ENCODE measurements at regions of chr7 and their contacts with region 1.

Region 1: GRCh38 chr7:44999245-45000095 is 531 bp upstream of the CCM2 start:
- DNase-seq: peak; percentile 100
- H3K4me3 ChIP-seq: peak overlapping the region; percentile 57 to 97 (median 96)
- H3K27ac ChIP-seq: peak overlapping the region; percentile 79
- H3K4me1 ChIP-seq: peaks cover 31% of the 10 kb centered on the region
- H3K27me3 ChIP-seq: no peaks in the 10 kb centered on the region
- CTCF ChIP-seq: no peak
- POLR2A ChIP-seq: peak; percentile 66

Region 2: DNA sequence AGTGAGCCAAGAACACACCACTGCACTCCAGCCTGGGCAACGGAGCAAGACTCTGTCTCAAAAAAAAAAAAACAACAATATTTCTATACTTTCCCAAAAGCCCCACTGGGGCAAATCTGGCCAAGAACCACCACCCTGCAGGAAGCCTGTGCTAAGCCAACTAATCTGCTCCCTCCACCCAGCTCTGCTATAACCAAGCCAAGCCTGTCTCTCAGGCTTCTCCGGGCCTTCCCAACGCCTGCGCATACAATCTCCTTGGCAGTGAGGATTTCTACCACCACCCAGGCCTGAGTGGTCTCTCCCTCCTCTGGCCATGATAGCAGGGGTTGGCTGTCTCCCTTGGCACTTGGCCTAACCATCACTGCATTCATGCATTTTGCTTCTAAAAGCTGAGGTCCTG is 440.0 kb before region 1 on chr7:
- CTCF ChIA-PET with region 1: no interaction called
- POLR2A ChIA-PET with region 1: no interaction called
- dilution Hi-C with region 1: no loop called
- intact Hi-C with region 1: no loop called
- DNase-seq: no peak
- H3K4me3 ChIP-seq: no peak overlapping the region
- H3K27ac ChIP-seq: no peak overlapping the region
- H3K4me1 ChIP-seq: no peaks in the 10 kb centered on the region
- H3K27me3 ChIP-seq: no peaks in the 10 kb centered on the region
- CTCF ChIP-seq: no peak
- POLR2A ChIP-seq: no peak

Region 3: GRCh38 chr7:44685723-44686122 is 313.7 kb before region 1 on chr7:
- CTCF ChIA-PET with region 1: no interaction called
- POLR2A ChIA-PET with region 1: no interaction called
- dilution Hi-C with region 1: no loop called
- intact Hi-C with region 1: no loop called
- DNase-seq: no peak
- H3K4me3 ChIP-seq: no peak overlapping the region
- H3K27ac ChIP-seq: no peak overlapping the region
- H3K4me1 ChIP-seq: no peaks in the 10 kb centered on the region
- H3K27me3 ChIP-seq: no peaks in the 10 kb centered on the region
- CTCF ChIP-seq: no peak
- POLR2A ChIP-seq: no peak

Region 4: GRCh38 chr7:44986218-44987053 is 13.0 kb before region 1 on chr7:
- CTCF ChIA-PET with region 1: interaction called, 15 read pairs
- POLR2A ChIA-PET with region 1: interaction called, 14 read pairs
- dilution Hi-C with region 1: no loop called
- intact Hi-C with region 1: loop called (anchors 1 kb)
- DNase-seq: peak; percentile 94
- H3K4me3 ChIP-seq: peak overlapping the region; percentile 42 to 81 (median 70)
- H3K27ac ChIP-seq: peak overlapping the region; percentile 88
- H3K4me1 ChIP-seq: peaks cover 29% of the 10 kb centered on the region
- H3K27me3 ChIP-seq: no peaks in the 10 kb centered on the region
- CTCF ChIP-seq: no peak
- POLR2A ChIP-seq: peak; percentile 98

Region 5: DNA sequence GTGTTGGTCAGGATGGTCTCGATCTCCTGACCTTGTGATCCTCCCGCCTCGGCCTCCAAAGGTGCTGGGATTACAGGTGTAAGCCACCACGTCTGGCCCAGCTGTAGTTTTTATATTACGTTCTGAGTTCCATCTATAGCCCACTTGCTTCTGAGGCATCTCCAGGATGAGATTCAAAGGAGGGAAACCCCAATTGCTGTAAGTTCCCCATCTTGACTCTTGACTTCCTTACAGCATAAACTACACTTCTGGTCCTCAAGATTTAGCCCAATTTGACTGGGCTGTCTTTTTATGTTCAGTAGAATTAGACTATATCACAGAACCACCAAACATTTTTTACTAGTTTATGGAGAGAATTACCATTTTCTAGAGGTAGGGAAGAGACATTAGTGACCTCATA is 44.9 kb after region 1 on chr7:
- CTCF ChIA-PET with region 1: no interaction called
- POLR2A ChIA-PET with region 1: no interaction called
- dilution Hi-C with region 1: no loop called
- intact Hi-C with region 1: loop called (anchors 5 kb)
- DNase-seq: no peak
- H3K4me3 ChIP-seq: no peak overlapping the region
- H3K27ac ChIP-seq: no peak overlapping the region
- H3K4me1 ChIP-seq: no peaks in the 10 kb centered on the region
- H3K27me3 ChIP-seq: no peaks in the 10 kb centered on the region
- CTCF ChIP-seq: no peak
- POLR2A ChIP-seq: no peak

Region 6: DNA sequence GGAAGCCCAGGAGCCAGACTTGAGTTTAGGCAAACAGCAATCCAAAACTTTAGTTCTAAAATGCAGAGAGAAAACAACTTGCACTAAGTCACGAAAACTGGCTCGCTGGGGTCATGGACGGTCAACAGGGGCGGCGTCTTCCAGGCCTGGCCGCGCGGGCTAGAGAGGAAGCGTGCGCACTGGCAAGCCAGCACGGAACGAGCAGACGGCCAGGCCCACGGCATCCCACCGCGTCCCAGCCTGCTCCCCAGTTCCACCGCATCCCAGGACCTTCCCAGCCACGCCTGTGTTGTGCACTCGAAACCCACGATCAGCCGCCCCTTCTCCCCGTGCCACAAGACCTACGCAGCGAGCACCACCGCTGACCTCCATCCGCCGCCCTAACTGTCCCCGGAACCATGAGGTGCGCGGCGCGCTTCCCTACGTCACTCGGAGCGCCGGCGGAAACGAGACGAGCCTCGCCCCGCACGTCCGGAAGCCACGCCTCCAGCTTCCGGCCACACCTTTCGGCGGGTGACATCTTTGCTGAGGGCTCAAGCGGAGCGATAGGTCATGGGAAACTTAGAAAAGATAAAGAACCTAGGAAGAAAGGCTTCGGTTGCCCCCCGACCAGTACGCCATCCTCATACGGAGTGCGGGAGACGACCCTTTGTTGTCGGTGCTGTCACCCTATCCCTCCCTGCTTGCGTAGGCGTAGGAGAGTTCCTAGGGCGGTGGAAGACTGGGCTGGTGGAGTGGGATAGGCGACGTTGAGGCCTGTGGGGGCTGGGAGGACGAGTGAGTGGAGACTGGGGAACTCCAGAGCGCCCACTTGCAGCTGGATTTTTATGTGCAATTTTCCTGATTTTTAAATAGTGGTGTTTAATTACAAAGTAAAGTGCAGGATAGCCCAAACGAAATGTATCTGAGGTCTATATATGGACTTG is 112.1 kb after region 1 on chr7 and contains the start of gene TBRG4:
- CTCF ChIA-PET with region 1: interaction called, 3 read pairs
- POLR2A ChIA-PET with region 1: no interaction called
- dilution Hi-C with region 1: no loop called
- intact Hi-C with region 1: loop called (anchors 1 kb)
- DNase-seq: peak; percentile 93
- H3K4me3 ChIP-seq: peak within 1 kb of the TSS; percentile 33 to 88 (median 64)
- H3K27ac ChIP-seq: peak within 1 kb of the TSS; percentile 57
- H3K4me1 ChIP-seq: peaks cover 8% of the 10 kb centered on the region
- H3K27me3 ChIP-seq: peaks cover 11 to 26% of the 10 kb centered on the region in 2 experiments
- CTCF ChIP-seq: peak in 1 of 2 donors; percentile 42
- POLR2A ChIP-seq: peak; percentile 82
- total RNA-seq, gene TBRG4: 56.7 and 63.4 TPM in 2 replicates